Panc1 (cell line): ENCODE measurements at regions of chrX and their contacts with region 1.

Region 1: DNA sequence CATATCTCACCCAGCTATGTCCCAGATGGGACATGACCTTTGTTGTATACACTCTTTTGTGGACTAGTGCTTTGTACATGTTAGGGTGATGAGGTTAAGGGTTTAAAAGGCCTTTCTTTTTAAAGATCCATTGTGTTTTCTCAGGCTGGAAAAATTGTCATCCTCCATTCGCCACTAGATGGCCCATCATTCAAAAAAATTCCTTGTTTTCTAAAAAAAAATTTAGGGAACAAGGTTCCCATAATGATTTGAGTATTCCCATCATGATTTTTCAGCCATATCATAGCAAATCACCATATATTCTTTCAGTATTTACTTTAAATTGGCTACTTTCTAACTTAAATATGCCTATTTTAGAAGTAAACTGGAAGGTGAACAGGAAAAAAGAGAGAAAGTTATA is 91.9 kb upstream of the TMEM164 start:
- DNase-seq: peak; percentile 12
- ATAC-seq: no peak
- H3K4me3 ChIP-seq: no peak overlapping the region
- H3K27ac ChIP-seq: no peak overlapping the region
- H3K4me1 ChIP-seq: no peaks in the 10 kb centered on the region
- H3K27me3 ChIP-seq: no peaks in the 10 kb centered on the region; the same call in 1 of the 2 replicates
- CTCF ChIP-seq: peak; percentile 67; the same call in 1 of the 2 replicates

Region 2: DNA sequence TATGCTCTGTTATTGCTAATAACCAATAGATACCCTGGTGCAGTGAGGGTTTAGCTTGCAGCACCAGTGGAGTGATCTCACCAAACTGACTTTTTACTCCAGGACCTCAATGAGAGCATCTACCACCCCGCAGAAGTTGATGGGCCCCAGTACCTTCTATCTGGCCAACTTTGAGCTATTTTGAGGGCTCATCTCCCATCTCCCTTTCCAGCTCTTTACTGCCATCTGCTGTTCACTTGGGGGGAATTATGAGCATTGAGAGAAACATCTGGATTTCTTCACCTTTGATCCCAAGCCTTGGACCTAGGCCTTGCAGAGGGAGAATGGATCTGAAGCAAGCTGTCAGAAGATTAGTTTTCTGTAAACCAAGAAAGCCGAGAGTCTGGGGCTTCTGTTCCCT is 235.5 kb after region 1 on chrX:
- CTCF ChIA-PET with region 1: interaction called, 5 read pairs
- POLR2A ChIA-PET with region 1: no interaction called
- in situ Hi-C with region 1: no loop called
- intact Hi-C with region 1: loop called (anchors 5 kb)
- DNase-seq: peak; percentile 36
- ATAC-seq: peak; percentile 77
- H3K4me3 ChIP-seq: no peak overlapping the region
- H3K27ac ChIP-seq: no peak overlapping the region
- H3K4me1 ChIP-seq: no peaks in the 10 kb centered on the region
- H3K27me3 ChIP-seq: no peaks in the 10 kb centered on the region
- CTCF ChIP-seq: peak; percentile 73

Region 3: GRCh38 chrX:111411983-111412382 is 1500.9 kb after region 1 on chrX and contains the start of gene DCX:
- CTCF ChIA-PET with region 1: no interaction called
- POLR2A ChIA-PET with region 1: no interaction called
- in situ Hi-C with region 1: no loop called
- intact Hi-C with region 1: no loop called
- DNase-seq: no peak
- ATAC-seq: no peak
- H3K4me3 ChIP-seq: no peak within 1 kb of the TSS
- H3K27ac ChIP-seq: no peak within 1 kb of the TSS
- H3K4me1 ChIP-seq: no peaks in the 10 kb centered on the region
- H3K27me3 ChIP-seq: no peaks in the 10 kb centered on the region
- CTCF ChIP-seq: no peak
- total RNA-seq, gene DCX: 0.13 TPM